H1 (cell line): ENCODE measurements at regions of chr1 and their contacts with region 1.

Region 1: GRCh38 chr1:941588-942383 is 17.3 kb downstream of the NOC2L start:
- DNase-seq: peak in 1 of 2 experiments; percentile 79
- H3K4me3 ChIP-seq: peak overlapping the region; percentile 12 to 59 (median 16)
- H3K27ac ChIP-seq: no peak overlapping the region
- H3K4me1 ChIP-seq: peaks cover 3 to 38% (median 23%) of the 10 kb centered on the region in 4 experiments
- H3K27me3 ChIP-seq: peaks cover 62 to 66% (median 64%) of the 10 kb centered on the region in 4 experiments
- CTCF ChIP-seq: no peak
- EP300 ChIP-seq: no peak
- POLR2A ChIP-seq: no peak
- RAD21 ChIP-seq: no peak

Region 2: DNA sequence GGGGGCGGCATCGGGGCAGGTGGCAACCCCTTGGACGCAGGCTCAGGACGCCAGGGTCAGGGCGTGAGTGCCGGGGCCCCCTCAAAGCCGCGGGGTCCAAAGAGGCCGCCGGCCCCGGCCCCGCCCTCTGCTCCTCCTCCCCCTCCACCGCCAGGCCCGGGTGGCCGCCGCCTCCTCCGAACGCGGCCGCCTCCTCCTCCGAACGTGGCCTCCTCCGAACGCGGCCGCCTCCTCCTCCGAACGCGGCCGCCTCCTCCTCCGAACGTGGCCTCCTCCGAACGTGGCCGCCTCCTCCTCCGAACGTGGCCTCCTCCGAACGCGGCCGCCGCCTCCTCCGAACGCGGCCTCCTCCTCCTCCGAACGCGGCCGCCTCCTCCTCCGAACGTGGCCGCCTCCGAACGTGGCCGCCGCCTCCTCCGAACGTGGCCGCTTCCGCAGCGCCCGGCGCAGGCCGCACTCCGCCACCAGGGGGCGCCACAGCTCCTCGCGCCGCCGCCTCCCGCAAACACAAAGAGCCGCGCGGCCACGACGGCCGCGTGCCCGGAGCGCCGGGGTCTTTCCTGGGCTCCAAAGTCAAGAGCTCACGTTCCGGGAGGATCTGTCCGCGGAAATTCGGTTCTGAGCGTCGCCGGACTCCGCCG is 37.4 kb before region 1 on chr1:
- CTCF ChIA-PET with region 1: interaction called, 19 read pairs
- POLR2A ChIA-PET with region 1: interaction called, 9 read pairs
- DNase-seq: peak in 1 of 2 experiments; percentile 96
- H3K4me3 ChIP-seq: peak overlapping the region in 2 of 4 experiments; percentile 28 to 64; a peak in 3 of 8 replicates
- H3K27ac ChIP-seq: no peak overlapping the region
- H3K4me1 ChIP-seq: peaks cover 0 to 5% (median 2%) of the 10 kb centered on the region in 4 experiments; a peak in 4 of 7 replicates
- H3K27me3 ChIP-seq: peaks cover 24 to 42% (median 36%) of the 10 kb centered on the region in 4 experiments
- CTCF ChIP-seq: peak; percentile 77 to 90 (median 82)
- EP300 ChIP-seq: peak in 1 of 2 experiments; percentile 57; a peak in 1 of 3 replicates
- POLR2A ChIP-seq: peak in 1 of 2 experiments; percentile 58; a peak in 1 of 3 replicates
- RAD21 ChIP-seq: peak; percentile 70 to 85

Region 3: DNA sequence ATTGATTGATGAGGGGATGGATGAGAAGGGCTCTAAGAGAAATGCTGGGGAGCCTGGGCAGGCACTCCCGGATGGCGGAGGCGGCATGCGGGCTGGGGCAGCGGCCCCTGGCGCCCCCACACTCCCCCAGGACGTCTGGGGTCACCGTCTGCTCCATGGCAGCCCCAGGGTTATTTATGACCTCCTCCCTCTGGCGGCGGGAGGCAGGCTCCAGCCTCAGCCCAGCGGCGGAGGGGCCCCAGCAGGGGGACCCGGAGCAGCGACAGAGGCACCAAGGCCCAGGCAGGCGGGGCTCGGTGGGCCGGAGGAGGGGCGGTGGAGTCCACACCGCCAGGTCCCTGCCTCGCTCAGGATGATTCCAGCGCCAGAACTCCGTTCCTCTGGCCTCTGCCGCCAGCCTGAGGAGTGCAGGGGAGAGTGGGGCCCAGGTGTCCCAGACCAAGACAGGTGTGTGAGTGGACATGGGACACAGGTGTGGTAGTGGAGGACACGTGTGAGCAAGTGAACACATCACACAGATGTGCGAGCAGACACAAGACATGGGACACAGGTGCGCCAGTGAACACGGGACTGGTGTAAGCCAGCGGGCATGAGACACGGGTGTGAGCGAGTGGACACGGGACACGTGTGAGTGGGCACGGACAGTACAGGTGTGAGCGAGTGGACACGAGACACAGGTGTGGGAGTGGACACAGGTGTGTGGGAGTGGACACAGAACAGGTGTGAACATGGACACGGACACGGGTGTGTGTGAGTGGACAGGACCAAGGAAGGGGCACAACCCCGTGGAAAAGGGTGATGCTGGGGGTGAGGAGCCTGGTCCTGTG is 20.6 kb before region 1 on chr1:
- CTCF ChIA-PET with region 1: interaction called, 14 read pairs
- POLR2A ChIA-PET with region 1: interaction called, 20 read pairs
- DNase-seq: peak in 1 of 2 experiments; percentile 43
- H3K4me3 ChIP-seq: peak overlapping the region in 1 of 4 experiments; percentile 44; a peak in 3 of 8 replicates
- H3K27ac ChIP-seq: no peak overlapping the region
- H3K4me1 ChIP-seq: peaks cover 0 to 38% (median 21%) of the 10 kb centered on the region in 4 experiments; a peak in 6 of 7 replicates
- H3K27me3 ChIP-seq: peaks cover 65 to 98% (median 89%) of the 10 kb centered on the region in 4 experiments
- CTCF ChIP-seq: peak in 2 of 3 experiments; percentile 28 to 66; a peak in 3 of 4 replicates
- EP300 ChIP-seq: peak in 1 of 2 experiments; percentile 46; a peak in 1 of 3 replicates
- POLR2A ChIP-seq: no peak
- RAD21 ChIP-seq: peak in 1 of 2 experiments; percentile 45; a peak in 2 of 4 replicates

Region 4: DNA sequence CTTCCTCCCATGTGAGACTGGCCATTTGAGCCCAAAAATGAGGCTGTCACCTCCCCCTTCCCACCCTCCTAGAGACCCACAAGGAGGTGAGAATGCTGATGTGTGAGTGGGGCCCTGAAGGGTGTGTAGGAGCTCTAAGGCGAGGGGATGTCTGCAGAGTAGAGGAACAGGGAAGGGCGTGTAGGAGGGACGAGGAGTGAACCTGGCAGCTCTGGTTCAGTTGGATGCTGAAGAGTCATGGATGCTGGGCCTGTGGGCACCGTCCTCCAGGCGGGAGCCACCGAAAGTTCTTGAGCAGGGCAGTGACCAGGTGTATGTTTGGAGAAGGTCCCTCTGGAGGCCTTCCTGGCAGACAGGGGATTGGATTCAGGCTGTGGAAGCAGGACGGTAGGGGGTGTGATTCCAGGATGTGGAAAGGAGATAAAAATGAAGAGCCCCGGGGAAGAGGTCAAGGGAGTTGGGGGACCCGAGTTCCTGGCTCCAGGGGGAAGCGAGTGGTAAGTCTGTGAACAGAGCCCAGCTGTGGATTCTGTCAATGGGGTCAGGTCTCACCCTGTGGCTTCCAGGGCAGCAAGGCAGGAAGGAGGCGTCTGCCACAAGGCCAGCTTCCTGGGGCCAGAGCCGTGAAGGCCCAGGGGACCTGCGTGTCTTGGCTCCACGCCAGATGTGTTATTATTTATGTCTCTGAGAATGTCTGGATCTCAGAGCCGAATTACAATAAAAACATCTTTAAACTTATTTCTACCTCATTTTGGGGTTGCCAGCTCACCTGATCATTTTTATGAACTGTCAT is 10.2 kb before region 1 on chr1:
- CTCF ChIA-PET with region 1: interaction called, 45 read pairs
- POLR2A ChIA-PET with region 1: interaction called, 28 read pairs
- DNase-seq: no peak
- H3K4me3 ChIP-seq: no peak overlapping the region
- H3K27ac ChIP-seq: no peak overlapping the region
- H3K4me1 ChIP-seq: peaks cover 2 to 10% (median 8%) of the 10 kb centered on the region in 4 experiments
- H3K27me3 ChIP-seq: peaks cover 63 to 90% (median 87%) of the 10 kb centered on the region in 4 experiments
- CTCF ChIP-seq: no peak
- EP300 ChIP-seq: no peak
- POLR2A ChIP-seq: no peak
- RAD21 ChIP-seq: no peak

Region 5: GRCh38 chr1:958823-959729 is 17.3 kb after region 1 on chr1 and contains the start of gene NOC2L:
- CTCF ChIA-PET with region 1: interaction called, 4 read pairs
- POLR2A ChIA-PET with region 1: interaction called, 65 read pairs
- DNase-seq: peak in 1 of 2 experiments; percentile 97
- H3K4me3 ChIP-seq: peak within 1 kb of the TSS; percentile 97 to 100 (median 98)
- H3K27ac ChIP-seq: no peak within 1 kb of the TSS
- H3K4me1 ChIP-seq: peaks cover 0 to 9% (median 3%) of the 10 kb centered on the region in 4 experiments; a peak in 5 of 7 replicates
- H3K27me3 ChIP-seq: peaks cover 4 to 19% (median 14%) of the 10 kb centered on the region in 4 experiments
- CTCF ChIP-seq: no peak
- EP300 ChIP-seq: no peak
- POLR2A ChIP-seq: no peak
- RAD21 ChIP-seq: no peak
- total RNA-seq, gene NOC2L: 130 TPM in 2 replicates

Region 6: DNA sequence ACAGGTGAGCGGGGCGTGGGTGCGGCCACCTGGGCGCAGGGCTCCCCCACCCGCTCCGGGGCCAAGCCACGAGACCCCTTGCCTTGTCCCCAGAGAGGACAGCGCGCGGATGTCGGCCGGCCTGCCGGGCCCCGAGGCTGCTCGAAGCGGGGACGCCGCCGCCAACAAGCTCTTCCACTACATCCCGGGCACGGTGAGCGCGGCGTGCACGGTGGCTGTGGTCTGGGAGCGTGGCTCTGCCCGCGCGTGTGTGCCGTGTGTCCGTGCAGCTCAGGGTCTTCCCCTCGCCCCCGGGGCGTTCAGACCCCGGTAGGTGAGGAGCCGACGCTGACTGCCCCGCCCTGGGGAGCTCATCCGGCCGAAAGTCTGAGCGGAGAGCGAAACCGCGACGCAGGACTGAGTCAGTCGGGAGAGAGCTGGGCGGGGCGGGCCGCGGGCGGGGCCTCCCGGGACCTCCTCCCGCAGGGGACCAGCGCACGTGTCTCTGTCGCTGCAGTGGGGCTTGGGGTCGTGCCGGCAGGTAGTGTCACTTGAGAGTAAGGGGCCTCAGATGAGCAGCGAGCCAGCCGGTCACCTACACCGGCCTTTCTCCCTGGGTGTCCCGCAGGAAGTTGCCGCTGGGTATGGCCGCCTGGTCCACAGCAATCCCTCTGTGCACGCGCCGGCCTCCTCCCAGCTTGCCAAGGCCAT is 25.0 kb after region 1 on chr1:
- CTCF ChIA-PET with region 1: interaction called, 3 read pairs
- POLR2A ChIA-PET with region 1: interaction called, 11 read pairs
- DNase-seq: peak in 1 of 2 experiments; percentile 82
- H3K4me3 ChIP-seq: peak overlapping the region; percentile 38 to 70 (median 48)
- H3K27ac ChIP-seq: no peak overlapping the region
- H3K4me1 ChIP-seq: peaks cover 0 to 13% (median 6%) of the 10 kb centered on the region in 4 experiments; a peak in 5 of 7 replicates
- H3K27me3 ChIP-seq: peaks cover 11 to 64% (median 53%) of the 10 kb centered on the region in 4 experiments
- CTCF ChIP-seq: no peak
- EP300 ChIP-seq: no peak
- POLR2A ChIP-seq: peak in 1 of 2 experiments; percentile 46; a peak in 1 of 3 replicates
- RAD21 ChIP-seq: no peak

Region 7: GRCh38 chr1:1307908-1308755 is 366.3 kb after region 1 on chr1 and contains the starts of genes ACAP3 and PUSL1:
- CTCF ChIA-PET with region 1: no interaction called
- POLR2A ChIA-PET with region 1: no interaction called
- DNase-seq: peak in 1 of 2 experiments; percentile 87
- H3K4me3 ChIP-seq: peak within 1 kb of the TSS; percentile 77 to 98 (median 87)
- H3K27ac ChIP-seq: no peak within 1 kb of the TSS; the same call in 1 of the 2 replicates
- H3K4me1 ChIP-seq: peaks cover 0 to 40% (median 31%) of the 10 kb centered on the region in 4 experiments; a peak in 6 of 7 replicates
- H3K27me3 ChIP-seq: peaks cover 0 to 4% (median 1%) of the 10 kb centered on the region in 4 experiments; a peak in 1 of 7 replicates
- CTCF ChIP-seq: no peak
- EP300 ChIP-seq: no peak
- POLR2A ChIP-seq: no peak
- RAD21 ChIP-seq: no peak
- total RNA-seq, gene ACAP3: 26.5 and 28.3 TPM in 2 replicates
- total RNA-seq, gene PUSL1: 38.8 and 40.1 TPM in 2 replicates